ENCODE measurements at regions of chr14 and their contacts with region 1.

Region 1: DNA sequence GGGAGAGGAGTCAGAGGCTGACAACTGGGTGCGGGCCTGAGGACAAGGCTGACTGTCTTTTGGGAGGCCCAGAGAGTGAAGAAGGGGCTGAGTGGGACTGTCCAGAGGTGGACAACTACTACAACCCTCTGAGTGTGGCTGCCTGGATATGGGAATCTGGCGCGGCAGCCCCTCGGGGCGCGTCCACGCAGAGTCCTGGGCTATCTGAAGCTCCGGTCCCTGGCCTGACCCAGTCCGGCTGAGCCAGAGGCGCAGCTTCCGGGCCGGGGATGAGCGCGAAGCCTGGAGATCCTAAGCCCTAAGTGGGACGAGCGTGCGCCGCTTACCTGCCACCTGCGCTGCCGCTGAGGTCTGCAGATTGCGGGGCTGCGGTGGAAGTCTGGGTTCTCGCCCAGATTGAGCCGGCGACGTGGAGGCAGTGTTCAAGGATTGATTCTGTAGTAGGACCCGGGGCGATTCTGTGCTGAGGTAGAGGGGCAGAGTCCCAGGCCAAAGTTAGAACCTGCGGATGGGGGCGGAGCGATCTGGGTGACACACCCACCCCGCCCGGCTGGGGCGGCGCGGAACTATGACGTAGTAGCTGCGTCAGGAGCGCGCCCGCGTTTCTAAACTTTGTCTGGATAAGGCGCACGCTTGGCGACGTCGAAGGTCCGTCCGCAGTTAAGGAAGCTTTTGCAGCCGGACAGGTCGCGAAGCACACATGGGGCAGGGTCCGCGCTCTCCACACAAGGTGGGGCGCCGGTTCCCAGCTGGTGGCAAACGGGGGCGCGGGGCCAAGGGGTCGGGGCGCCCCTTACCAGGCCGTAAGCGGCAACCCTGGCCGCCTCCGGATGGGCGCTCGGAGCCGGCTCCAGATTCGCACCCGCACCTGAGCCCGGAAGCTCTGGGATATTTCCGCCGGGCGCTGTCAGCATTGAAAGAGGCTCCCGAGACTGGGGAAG is at the starts of genes DHRS1 and NOP9:
- DNase-seq: peak; percentile 32
- H3K4me3 ChIP-seq: peak within 1 kb of the TSS; percentile 72
- H3K27me3 ChIP-seq: no peaks in the 10 kb centered on the region
- CTCF ChIP-seq: no peak
- polyA plus RNA-seq, gene DHRS1: 40.5 and 57.1 TPM in 2 replicates
- polyA plus RNA-seq, gene NOP9: 13.9 and 16.3 TPM in 2 replicates

Region 2: DNA sequence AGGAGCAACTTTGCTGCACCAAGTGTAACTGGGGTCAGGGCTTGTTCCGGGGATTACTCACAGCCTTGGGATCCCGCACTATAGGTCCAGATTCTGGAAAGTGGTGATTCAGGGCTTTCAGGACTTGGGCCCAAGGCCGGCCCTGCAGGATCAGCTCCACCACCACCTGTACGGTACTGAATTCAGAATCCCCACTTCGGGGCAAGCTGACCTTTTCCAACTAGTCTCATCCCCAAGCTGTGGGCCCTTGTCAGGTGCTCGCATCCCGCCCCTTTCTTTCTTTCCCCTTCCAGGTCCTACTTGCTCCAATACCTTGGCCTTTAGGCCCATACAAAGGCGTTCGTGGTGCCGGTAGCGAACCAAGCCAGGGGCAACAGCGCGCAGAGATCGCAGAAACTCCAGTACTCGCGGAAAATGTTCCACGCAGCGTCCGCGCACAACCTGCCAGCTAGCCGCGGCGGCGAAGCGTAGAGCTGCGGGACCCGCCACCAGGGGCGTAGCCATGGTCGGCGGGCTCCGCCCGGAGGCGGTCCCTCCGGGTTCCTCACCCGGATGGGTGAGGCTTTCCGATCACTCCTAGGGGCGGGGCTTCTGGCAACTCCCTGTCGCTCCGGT is 57.6 kb before region 1 on chr14:
- CTCF ChIA-PET with region 1: interaction called, 205 read pairs
- POLR2A ChIA-PET with region 1: no interaction called
- DNase-seq: no peak
- H3K4me3 ChIP-seq: peak overlapping the region; percentile 64
- H3K27me3 ChIP-seq: no peaks in the 10 kb centered on the region
- CTCF ChIP-seq: peak; percentile 70

Region 3: GRCh38 chr14:24259252-24259995 is 40.1 kb before region 1 on chr14:
- CTCF ChIA-PET with region 1: interaction called, 14 read pairs
- POLR2A ChIA-PET with region 1: no interaction called
- DNase-seq: no peak
- H3K4me3 ChIP-seq: no peak overlapping the region
- H3K27me3 ChIP-seq: no peaks in the 10 kb centered on the region
- CTCF ChIP-seq: no peak

Region 4: GRCh38 chr14:24279301-24280186 is 20.0 kb before region 1 on chr14:
- CTCF ChIA-PET with region 1: interaction called, 47 read pairs
- POLR2A ChIA-PET with region 1: no interaction called
- DNase-seq: no peak
- H3K4me3 ChIP-seq: no peak overlapping the region
- H3K27me3 ChIP-seq: no peaks in the 10 kb centered on the region
- CTCF ChIP-seq: no peak

Region 5: GRCh38 chr14:24372701-24373416 is 73.3 kb after region 1 on chr14:
- CTCF ChIA-PET with region 1: no interaction called
- POLR2A ChIA-PET with region 1: no interaction called
- DNase-seq: no peak
- H3K4me3 ChIP-seq: no peak overlapping the region
- H3K27me3 ChIP-seq: no peaks in the 10 kb centered on the region
- CTCF ChIP-seq: no peak